ENCODE measurements at regions of chr20 and their contacts with region 1.

Region 1: DNA sequence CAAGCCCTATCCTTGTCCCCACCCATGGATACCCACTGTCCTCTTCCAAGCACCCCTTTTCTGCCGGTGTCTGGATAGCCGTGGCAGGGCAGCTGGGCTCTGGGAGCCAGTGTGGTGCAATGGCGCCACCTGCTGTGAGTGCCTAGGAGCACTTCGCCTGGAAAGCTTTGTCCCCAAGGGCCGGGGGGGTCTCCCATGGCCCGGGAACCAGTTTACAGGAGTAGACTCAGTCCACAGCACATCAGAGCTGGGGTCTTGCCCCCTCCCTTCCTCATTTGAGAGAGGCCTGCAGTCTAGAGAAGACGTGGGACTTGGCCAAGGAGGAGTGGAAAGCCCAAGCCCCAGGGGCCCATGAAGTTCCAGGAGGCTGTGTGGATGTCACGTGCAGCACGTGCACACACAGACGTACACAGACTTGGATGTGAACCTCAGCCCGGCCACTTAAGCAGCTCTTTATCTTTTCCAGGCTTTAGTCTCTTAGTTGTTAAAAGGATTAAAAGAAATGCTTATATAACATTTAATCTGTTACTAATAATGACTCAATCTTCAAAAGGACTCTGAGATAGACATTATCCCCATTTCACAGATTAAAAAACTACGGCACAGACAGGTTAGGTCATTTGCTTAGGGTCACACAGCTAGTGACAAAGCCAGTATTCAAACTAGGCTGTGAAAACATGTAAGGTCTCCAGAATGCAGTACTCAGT is 40.9 kb upstream of the CDH22 start:
- DNase-seq: peak; percentile 65
- ATAC-seq: peak; percentile 65
- H3K4me3 Mint-ChIP-seq: no peak overlapping the region
- H3K27ac Mint-ChIP-seq: no peak overlapping the region
- H3K4me1 Mint-ChIP-seq: peaks cover 24% of the 10 kb centered on the region
- H3K27me3 Mint-ChIP-seq: peaks cover 8% of the 10 kb centered on the region

Region 2: GRCh38 chr20:46307139-46307998 is 41.8 kb before region 1 on chr20:
- CTCF ChIA-PET with region 1: interaction called, 15 read pairs
- POLR2A ChIA-PET with region 1: no interaction called
- DNase-seq: peak; percentile 75
- ATAC-seq: peak; percentile 83
- H3K4me3 Mint-ChIP-seq: no peak overlapping the region
- H3K27ac Mint-ChIP-seq: no peak overlapping the region
- H3K4me1 Mint-ChIP-seq: peaks cover 4% of the 10 kb centered on the region
- H3K27me3 Mint-ChIP-seq: peaks cover 63% of the 10 kb centered on the region

Region 3: DNA sequence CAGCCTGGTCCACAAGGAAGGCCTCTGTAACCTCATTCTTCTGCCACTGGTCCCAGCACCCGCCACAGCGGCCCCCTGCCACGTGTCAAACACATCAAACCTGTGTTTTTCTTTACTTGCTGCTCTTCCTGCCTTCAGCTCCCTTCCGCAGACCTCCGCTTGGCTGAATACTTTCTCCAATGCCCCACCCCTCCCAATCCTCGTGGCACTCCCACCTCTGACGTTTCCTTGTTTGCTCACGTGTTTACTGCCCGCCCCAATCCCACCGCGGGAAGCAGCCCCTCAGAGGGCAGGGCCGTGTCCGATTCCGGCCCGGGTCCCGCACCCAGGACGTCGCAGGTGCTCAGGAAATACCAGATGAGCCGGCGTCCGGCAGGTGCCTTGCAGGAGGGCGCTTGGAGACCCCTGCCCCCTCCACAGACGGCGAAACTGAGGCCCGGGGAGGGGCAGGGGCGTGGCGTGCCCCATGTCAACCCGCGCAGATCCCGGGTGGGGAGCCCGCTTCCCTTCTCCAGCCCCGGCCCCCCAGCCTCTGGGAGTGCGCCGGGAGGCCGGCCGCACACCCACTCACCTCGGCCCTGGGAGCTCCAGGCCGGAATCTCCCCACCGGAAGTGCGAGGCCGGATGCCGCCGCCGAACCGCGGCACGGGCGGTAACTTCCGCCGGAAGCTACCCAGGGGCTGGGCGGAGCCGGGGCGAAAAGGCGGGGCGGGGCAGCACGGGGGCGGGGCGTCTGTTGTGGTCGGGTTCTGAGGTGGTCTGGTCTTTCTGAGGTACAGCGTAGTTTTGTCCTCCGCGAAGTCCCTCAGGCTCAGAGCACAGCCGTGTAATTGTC is 14.8 kb after region 1 on chr20:
- CTCF ChIA-PET with region 1: interaction called, 20 read pairs
- POLR2A ChIA-PET with region 1: interaction called, 4 read pairs
- DNase-seq: peak; percentile 91
- ATAC-seq: peak; percentile 83
- H3K4me3 Mint-ChIP-seq: peak overlapping the region; percentile 84
- H3K27ac Mint-ChIP-seq: peak overlapping the region; percentile 88
- H3K4me1 Mint-ChIP-seq: peaks cover 72% of the 10 kb centered on the region
- H3K27me3 Mint-ChIP-seq: no peaks in the 10 kb centered on the region

Region 4: DNA sequence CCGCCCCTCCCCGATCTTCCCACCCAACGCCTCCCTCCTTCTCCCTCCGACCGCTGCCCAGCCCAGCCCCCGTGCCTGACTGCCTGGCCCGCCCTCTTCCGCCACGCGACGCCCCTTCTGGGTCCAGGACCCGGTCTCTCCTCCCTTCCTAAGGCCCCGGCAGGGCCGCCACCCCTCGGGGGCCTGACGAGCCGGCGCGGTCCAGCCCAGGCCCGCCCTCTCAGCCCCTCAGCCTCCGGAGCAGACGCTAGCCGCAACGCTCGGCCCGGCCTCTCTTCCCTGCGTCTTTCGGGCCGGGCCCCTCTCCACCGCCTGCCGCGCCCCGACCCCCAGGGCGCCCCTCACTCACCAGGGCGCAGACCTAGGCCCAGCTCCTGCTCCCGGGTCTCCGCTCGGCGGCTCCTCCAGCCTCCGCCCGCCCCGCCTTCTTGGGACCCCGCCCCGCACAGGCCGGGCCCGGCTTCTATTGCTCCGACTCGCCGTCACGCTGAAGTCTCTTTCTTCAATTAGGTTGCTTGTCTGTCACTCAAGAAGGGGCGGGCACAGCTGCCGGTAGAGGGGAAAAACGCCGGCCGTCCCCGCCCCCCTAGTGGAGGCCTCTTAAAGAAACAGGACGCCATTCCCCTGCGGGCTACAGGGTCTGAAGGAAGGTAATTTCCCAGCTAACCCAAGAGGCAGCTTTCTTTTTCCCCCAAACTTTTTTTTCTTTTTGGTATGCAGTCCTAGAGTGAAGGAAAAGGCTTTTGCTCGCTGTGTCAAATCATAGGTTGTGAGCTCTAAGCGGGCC is 57.2 kb after region 1 on chr20 and contains the start of gene ELMO2:
- CTCF ChIA-PET with region 1: interaction called, 12 read pairs
- POLR2A ChIA-PET with region 1: no interaction called
- DNase-seq: peak; percentile 98
- ATAC-seq: peak; percentile 89
- H3K4me3 Mint-ChIP-seq: peak within 1 kb of the TSS; percentile 89
- H3K27ac Mint-ChIP-seq: peak within 1 kb of the TSS; percentile 90
- H3K4me1 Mint-ChIP-seq: peaks cover 76% of the 10 kb centered on the region
- H3K27me3 Mint-ChIP-seq: no peaks in the 10 kb centered on the region
- total RNA-seq, gene ELMO2: 66.1 to 82.3 TPM